CD4-positive, alpha-beta T cell (primary cell): ENCODE measurements at regions of chr1 and their contacts with region 1.

Region 1: DNA sequence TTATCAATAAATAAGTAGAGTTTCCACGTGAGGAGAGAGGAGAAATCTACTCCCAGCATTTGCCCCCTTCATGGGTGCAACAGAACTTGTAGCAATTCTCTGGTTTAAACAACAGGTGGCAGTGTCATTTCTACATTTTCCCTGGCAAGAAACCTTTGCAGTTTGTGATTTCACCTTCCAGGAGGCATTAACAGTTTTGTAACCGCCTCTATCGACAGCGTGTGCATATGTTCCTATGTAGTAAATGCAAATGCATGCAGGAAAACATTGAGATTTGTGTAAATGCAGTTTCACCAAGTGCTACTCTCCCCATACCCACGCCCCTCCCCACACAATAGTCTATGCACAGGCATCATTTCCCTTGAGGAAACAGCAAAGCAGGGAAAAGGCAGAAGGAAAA is 494.7 kb downstream of the SMYD3 start:
- DNase-seq: peak in 3 of 14 experiments; percentile 23 to 41 (median 33)
- ATAC-seq: peak; percentile 34
- H3K4me3 ChIP-seq: no peak overlapping the region
- H3K4me3 Mint-ChIP-seq: no peak overlapping the region
- H3K27ac ChIP-seq: no peak overlapping the region
- H3K27ac Mint-ChIP-seq: no peak overlapping the region
- H3K4me1 ChIP-seq: no peaks in the 10 kb centered on the region
- H3K4me1 Mint-ChIP-seq: peaks cover 6% of the 10 kb centered on the region
- H3K27me3 ChIP-seq: no peaks in the 10 kb centered on the region
- H3K27me3 Mint-ChIP-seq: no peaks in the 10 kb centered on the region
- CTCF ChIP-seq: peak; percentile 51

Region 2: DNA sequence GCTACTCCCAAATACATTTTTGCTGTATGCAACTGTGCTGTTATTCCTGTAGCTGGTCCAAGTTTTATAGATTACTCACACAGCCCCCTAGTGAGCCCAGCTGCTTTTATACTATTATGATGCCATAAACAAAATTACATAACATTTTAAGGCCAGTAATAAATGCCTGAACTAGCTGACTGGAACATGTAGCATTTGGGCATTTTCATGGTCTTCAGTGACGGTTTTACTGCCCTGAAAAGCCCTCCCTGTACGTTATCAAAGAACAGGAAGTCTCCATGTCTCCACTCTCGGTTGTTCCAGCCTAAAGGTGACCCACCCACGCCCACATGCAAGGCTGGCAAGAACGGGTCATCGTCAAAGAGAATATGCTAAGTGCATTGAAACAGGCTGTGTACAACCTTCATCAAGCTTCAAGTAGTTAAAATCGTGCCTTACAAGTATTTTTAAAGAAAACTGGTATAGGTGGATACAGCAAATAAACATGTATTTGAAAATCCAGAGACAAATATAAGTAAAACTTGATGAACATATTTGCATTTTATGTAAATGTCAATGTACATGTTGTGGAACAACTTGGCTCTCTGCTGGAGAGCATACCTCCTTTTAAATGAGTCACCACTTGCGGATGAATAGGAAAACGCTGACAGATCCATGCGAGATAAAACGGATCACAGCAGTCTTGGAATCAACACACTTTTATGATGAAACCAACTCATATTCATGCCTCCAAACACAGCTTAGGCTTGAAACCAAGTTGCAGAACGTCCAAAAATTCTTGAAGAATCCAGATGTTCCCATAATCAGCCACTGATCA is 25.7 kb before region 1 on chr1:
- CTCF ChIA-PET with region 1: no interaction called
- POLR2A ChIA-PET with region 1: no interaction called
- intact Hi-C with region 1: no loop called
- DNase-seq: no peak
- ATAC-seq: no peak
- H3K4me3 ChIP-seq: no peak overlapping the region
- H3K4me3 Mint-ChIP-seq: no peak overlapping the region
- H3K27ac ChIP-seq: no peak overlapping the region
- H3K27ac Mint-ChIP-seq: no peak overlapping the region
- H3K4me1 ChIP-seq: no peaks in the 10 kb centered on the region
- H3K4me1 Mint-ChIP-seq: no peaks in the 10 kb centered on the region
- H3K27me3 ChIP-seq: no peaks in the 10 kb centered on the region
- H3K27me3 Mint-ChIP-seq: no peaks in the 10 kb centered on the region
- CTCF ChIP-seq: no peak

Region 3: DNA sequence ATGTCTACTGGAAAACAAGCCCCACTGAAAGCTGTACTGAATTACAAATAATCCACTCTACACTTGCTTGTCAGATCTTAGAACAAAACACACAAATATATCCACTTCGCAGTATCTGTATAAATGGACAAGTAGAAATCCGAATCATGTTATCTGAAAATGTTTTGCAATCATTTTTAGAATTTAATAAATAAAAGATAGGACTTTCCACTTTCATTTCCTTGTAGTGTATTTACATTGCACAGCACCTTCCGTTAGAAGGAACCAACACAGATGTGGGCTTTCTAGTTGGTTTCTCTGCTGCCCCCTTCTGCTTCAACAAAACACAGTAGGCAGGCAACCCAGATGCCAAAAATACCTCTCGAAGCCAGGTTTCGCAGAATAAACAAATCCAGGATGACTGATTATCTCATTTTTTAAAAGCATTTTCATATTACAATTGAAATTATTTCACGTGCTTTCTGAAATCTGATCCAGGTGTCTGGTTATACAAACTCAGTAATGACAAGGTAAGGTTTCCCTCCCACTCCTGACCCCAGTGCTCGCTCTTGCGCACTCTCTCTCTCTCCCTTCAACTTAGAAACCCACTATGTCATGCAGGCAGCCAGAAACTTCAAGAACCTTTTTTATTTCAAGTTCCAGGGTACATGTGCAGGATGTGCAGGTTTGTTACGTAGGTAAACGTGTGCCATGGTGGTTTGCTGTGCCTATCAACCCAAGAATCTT is 104.9 kb after region 1 on chr1:
- CTCF ChIA-PET with region 1: no interaction called
- POLR2A ChIA-PET with region 1: no interaction called
- intact Hi-C with region 1: loop called (anchors 1 to 5 kb)
- DNase-seq: peak; percentile 9 to 78 (median 30)
- ATAC-seq: peak; percentile 93
- H3K4me3 ChIP-seq: no peak overlapping the region
- H3K4me3 Mint-ChIP-seq: peak overlapping the region; percentile 64
- H3K27ac ChIP-seq: peak overlapping the region in 1 of 2 donors; percentile 34
- H3K27ac Mint-ChIP-seq: peak overlapping the region; percentile 88
- H3K4me1 ChIP-seq: no peaks in the 10 kb centered on the region
- H3K4me1 Mint-ChIP-seq: peaks cover 45% of the 10 kb centered on the region
- H3K27me3 ChIP-seq: no peaks in the 10 kb centered on the region
- H3K27me3 Mint-ChIP-seq: no peaks in the 10 kb centered on the region
- CTCF ChIP-seq: peak; percentile 67

Region 4: DNA sequence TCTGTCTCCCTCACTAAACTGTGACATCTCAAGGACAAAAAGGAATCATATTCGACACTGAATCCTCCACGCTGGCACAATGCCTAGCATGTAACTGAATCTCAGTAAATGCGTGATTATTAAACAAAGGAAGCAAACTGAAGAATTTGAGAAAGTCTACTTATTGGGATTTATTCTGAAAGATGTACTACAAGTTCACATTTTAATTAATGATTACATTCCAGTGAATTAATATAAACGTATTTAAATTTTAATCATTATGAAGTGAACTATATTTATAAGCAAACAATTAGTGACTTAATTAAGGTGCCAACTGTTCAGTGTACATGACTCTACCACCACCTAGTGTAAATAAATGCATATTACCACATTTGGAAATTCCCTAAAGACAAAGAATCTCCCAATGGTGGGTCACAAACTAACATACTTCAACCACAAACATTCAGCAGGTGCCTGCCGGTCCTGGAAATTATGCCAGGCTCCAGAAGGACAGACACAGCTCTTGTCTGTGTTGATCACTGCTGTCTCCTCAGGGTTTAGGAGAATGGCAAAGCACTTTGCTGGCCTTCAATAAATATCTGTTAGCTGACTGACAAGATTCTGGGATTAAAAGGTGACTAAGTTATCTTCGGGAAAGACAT is 438.4 kb after region 1 on chr1:
- CTCF ChIA-PET with region 1: no interaction called
- POLR2A ChIA-PET with region 1: no interaction called
- intact Hi-C with region 1: loop called (anchors 10 kb)
- DNase-seq: peak in 3 of 14 experiments; percentile 16 to 24 (median 19)
- ATAC-seq: no peak
- H3K4me3 ChIP-seq: no peak overlapping the region
- H3K4me3 Mint-ChIP-seq: no peak overlapping the region
- H3K27ac ChIP-seq: no peak overlapping the region
- H3K27ac Mint-ChIP-seq: no peak overlapping the region
- H3K4me1 ChIP-seq: no peaks in the 10 kb centered on the region
- H3K4me1 Mint-ChIP-seq: peaks cover 5% of the 10 kb centered on the region
- H3K27me3 ChIP-seq: no peaks in the 10 kb centered on the region
- H3K27me3 Mint-ChIP-seq: no peaks in the 10 kb centered on the region
- CTCF ChIP-seq: peak; percentile 35

Region 5: GRCh38 chr1:246497331-246497915 is 485.1 kb after region 1 on chr1:
- CTCF ChIA-PET with region 1: no interaction called
- POLR2A ChIA-PET with region 1: no interaction called
- intact Hi-C with region 1: loop called in 1 of 2 experiments (anchors 5 kb)
- DNase-seq: peak in 4 of 14 experiments; percentile 31 to 84 (median 81)
- ATAC-seq: peak; percentile 78
- H3K4me3 ChIP-seq: no peak overlapping the region
- H3K4me3 Mint-ChIP-seq: no peak overlapping the region
- H3K27ac ChIP-seq: no peak overlapping the region
- H3K27ac Mint-ChIP-seq: no peak overlapping the region
- H3K4me1 ChIP-seq: no peaks in the 10 kb centered on the region
- H3K4me1 Mint-ChIP-seq: peaks cover 17% of the 10 kb centered on the region
- H3K27me3 ChIP-seq: no peaks in the 10 kb centered on the region
- H3K27me3 Mint-ChIP-seq: no peaks in the 10 kb centered on the region
- CTCF ChIP-seq: peak; percentile 75

Region 6: DNA sequence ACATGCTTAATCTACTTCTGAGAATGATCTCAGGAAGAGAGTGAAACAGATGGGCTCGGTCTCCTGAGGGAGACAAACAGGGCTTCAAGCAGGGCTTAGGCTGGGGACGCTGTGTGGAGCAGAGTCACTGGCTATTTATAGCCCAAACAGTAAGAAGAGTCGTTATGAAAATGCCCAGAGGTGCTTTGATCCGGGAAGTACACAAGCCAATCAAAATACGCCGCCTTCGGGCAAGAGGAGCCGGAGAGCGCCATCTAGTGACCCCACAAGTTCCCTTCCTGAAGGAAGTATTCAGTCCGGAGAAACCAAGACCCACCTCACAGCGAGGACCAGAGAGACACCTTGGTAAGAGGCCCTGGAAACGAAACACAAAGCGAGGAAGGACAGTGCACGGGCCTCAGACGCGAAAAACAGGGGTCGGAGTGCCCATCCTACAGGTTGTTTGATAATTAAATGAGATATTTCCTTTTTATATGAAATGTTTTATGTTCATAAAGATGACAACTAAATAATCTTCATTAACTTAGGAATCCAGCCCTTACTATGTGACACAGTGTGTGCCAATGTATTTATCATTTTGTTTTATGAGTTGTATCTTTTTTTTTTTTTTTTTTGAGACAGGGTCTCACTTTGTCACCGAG is 686.9 kb after region 1 on chr1:
- CTCF ChIA-PET with region 1: no interaction called
- POLR2A ChIA-PET with region 1: no interaction called
- intact Hi-C with region 1: loop called in 1 of 2 experiments (anchors 5 kb)
- DNase-seq: peak; percentile 58 to 90 (median 70)
- ATAC-seq: peak; percentile 89
- H3K4me3 ChIP-seq: peak overlapping the region; percentile 19
- H3K4me3 Mint-ChIP-seq: peak overlapping the region; percentile 70
- H3K27ac ChIP-seq: no peak overlapping the region
- H3K27ac Mint-ChIP-seq: no peak overlapping the region
- H3K4me1 ChIP-seq: peaks cover 17% of the 10 kb centered on the region
- H3K4me1 Mint-ChIP-seq: peaks cover 6% of the 10 kb centered on the region
- H3K27me3 ChIP-seq: no peaks in the 10 kb centered on the region
- H3K27me3 Mint-ChIP-seq: peaks cover 4% of the 10 kb centered on the region
- CTCF ChIP-seq: peak; percentile 80

Region 7: DNA sequence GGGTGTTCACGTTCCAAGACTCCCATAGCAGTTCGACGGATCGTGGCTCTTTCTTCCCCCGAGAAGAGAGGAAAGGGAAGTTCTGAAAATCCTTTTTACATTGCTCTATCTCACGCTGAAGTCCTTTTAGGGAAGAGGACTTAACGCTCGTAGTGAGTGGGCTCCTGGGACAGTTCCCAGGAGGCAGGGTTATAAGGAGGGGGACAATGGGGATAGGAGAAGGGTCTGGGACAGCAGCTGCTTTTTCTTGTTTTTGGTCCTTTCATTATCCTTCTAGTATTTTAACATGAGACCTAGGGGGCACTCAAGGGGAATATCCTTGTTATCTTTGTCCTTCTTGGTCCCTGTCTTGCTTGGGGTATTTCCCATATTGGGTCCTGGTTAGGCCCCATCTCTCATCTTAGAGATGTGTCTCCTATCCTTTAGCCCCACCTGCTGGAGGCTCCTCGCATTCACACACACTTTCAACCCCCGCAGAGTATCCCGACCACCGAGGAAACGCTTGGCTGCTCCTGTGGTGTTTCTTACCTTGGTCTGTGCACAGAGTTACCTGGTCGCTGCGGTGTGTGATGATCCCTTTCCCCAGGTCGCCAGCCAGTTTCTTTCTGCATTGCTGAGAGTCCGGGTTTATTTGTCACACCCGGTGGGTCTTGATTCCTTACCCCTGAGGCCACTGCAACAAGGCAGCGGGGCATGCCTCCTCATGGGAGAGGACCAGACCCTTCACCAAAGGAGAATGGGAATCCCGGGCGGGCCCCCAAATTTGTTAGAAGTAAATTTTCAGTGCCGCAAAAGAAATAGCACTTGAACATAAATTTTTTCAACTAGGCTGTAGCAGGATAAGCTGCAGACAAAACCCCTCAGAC is 741.6 kb after region 1 on chr1:
- CTCF ChIA-PET with region 1: no interaction called
- POLR2A ChIA-PET with region 1: no interaction called
- intact Hi-C with region 1: loop called in 1 of 2 experiments (anchors 5 kb)
- DNase-seq: peak; percentile 26 to 74 (median 40)
- ATAC-seq: peak; percentile 71
- H3K4me3 ChIP-seq: no peak overlapping the region
- H3K4me3 Mint-ChIP-seq: no peak overlapping the region
- H3K27ac ChIP-seq: no peak overlapping the region
- H3K27ac Mint-ChIP-seq: no peak overlapping the region
- H3K4me1 ChIP-seq: no peaks in the 10 kb centered on the region
- H3K4me1 Mint-ChIP-seq: no peaks in the 10 kb centered on the region
- H3K27me3 ChIP-seq: no peaks in the 10 kb centered on the region
- H3K27me3 Mint-ChIP-seq: no peaks in the 10 kb centered on the region
- CTCF ChIP-seq: peak; percentile 64